Heart left ventricle (tissue), 16 donors: ENCODE measurements at regions of chr6 and their contacts with region 1.

Region 1: DNA sequence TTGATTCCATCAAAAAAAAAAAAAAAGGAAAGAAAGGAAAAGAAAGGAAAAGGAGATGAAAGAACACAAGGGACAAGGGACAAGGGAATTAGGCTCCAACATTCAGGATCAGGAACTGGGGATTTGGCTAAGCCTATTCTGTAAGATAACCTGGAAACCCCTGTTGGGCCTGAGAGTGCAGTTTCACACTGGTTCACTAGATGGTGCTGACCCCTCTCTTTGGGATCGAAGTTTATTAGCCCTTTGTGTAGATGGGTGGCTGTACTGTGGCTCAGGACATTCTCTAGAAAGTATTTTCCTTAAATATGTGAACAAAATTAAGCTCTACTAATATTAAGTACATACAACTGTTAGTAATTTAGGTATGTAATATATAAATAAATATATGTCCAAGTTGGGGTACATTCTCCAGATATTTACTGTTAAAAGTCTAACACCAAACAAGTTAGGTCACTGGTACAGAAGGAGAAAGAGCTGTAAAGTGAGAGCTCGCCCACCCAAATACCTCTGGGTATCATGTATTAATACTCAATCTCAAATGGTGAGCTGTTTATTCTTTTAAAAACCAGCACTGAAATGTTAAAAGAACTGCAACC is 6.3 kb downstream of the OR2A4 start:
- DNase-seq: peak in 4 of 5 donors; percentile 27 to 36 (median 32)
- ATAC-seq: peak in 3 of 4 donors; percentile 79 to 85 (median 81)
- H3K4me3 ChIP-seq: no peak overlapping the region
- H3K27ac ChIP-seq: no peak overlapping the region
- H3K4me1 ChIP-seq: no peaks in the 10 kb centered on the region
- H3K27me3 ChIP-seq: no peaks in the 10 kb centered on the region
- CTCF ChIP-seq: peak; percentile 54 to 83 (median 75)
- POLR2A ChIP-seq: no peak

Region 2: DNA sequence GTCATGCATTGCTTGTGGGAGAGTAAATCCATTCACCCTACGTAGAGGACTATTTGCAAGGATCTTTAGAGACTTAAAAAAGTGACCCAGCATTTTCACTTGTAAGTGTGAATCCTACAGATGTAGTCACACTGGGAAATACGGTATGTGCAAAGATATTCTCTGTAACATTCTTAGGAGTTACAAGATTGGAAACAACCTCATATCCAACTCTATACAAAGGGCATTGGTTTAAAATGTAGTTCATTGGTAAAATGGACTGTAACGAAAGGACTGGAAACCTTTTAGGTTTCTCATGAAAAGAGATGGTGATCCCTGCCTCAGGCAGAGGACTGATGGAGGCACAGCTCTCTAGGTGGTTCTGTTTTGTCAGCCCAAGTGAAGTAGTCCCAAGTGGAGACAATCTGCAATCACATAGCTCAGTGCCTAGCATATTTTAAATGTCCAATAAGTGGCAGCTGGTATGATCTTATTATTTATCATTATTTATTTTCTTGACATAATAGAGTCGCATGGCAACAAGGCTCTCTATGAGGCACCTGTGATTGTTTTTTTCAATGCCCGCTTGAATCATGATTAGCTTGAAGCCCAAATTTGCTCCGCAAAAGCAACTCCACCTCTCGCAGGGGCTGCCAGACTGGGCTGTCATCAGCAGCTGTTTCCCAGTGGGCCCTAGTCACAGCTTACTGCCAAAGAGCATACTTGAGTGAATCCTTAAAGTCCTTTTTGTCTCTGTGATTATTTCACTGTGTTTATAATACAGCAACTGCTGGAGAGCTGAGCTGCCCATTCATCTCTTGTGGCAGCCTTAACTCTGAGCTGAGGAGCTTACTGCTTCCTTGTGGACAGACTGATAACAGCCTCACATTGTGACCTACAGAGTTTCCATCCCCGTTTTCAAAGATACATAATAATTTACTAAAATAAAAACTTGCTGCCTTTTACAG is 93.1 kb after region 1 on chr6:
- intact Hi-C with region 1: loop called in 2 of 10 experiments (anchors 10 kb)
- DNase-seq: no peak
- ATAC-seq: peak in 2 of 4 donors; percentile 31 to 44
- H3K4me3 ChIP-seq: no peak overlapping the region
- H3K27ac ChIP-seq: no peak overlapping the region
- H3K4me1 ChIP-seq: peaks cover 0 to 5% (median 0%) of the 10 kb centered on the region in 12 donors
- H3K27me3 ChIP-seq: no peaks in the 10 kb centered on the region
- CTCF ChIP-seq: peak in 4 of 12 donors; percentile 21 to 40 (median 28)
- POLR2A ChIP-seq: no peak

Region 3: GRCh38 chr6:132136981-132137380 is 442.1 kb after region 1 on chr6:
- intact Hi-C with region 1: no loop called
- DNase-seq: no peak
- ATAC-seq: no peak
- H3K4me3 ChIP-seq: no peak overlapping the region
- H3K27ac ChIP-seq: no peak overlapping the region
- H3K4me1 ChIP-seq: peaks cover 0 to 27% (median 20%) of the 10 kb centered on the region in 12 donors
- H3K27me3 ChIP-seq: no peaks in the 10 kb centered on the region
- CTCF ChIP-seq: no peak
- POLR2A ChIP-seq: no peak

Region 4: DNA sequence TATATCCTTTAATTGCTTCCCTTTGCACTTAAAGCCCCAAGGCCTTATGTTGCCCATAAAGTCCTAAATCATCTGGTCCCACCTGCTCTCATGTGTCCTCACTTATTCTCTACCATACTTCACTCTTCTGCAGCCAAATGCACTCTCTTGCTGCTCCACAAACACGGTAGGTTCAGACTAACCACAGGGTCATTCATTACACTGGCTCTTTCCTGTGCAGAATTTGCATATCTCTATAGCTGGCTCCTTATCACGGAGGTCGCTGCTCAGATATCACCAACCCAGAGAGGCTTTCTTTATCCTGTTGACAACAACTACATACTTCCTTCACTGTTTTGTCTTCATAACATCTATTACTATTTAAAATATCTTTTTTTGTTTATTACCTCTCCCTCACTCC is 619.5 kb after region 1 on chr6:
- intact Hi-C with region 1: no loop called
- DNase-seq: no peak
- ATAC-seq: no peak
- H3K4me3 ChIP-seq: no peak overlapping the region
- H3K27ac ChIP-seq: no peak overlapping the region
- H3K4me1 ChIP-seq: peaks cover 0 to 3% (median 0%) of the 10 kb centered on the region in 12 donors
- H3K27me3 ChIP-seq: no peaks in the 10 kb centered on the region
- CTCF ChIP-seq: no peak
- POLR2A ChIP-seq: no peak

Region 5: GRCh38 chr6:132456700-132457143 is 761.8 kb after region 1 on chr6:
- intact Hi-C with region 1: no loop called
- DNase-seq: peak; percentile 39 to 74 (median 72)
- ATAC-seq: peak; percentile 94 to 98 (median 96)
- H3K4me3 ChIP-seq: no peak overlapping the region
- H3K27ac ChIP-seq: peak overlapping the region in 2 of 12 donors; percentile 14 to 22
- H3K4me1 ChIP-seq: peaks cover 0 to 12% (median 0%) of the 10 kb centered on the region in 12 donors
- H3K27me3 ChIP-seq: no peaks in the 10 kb centered on the region
- CTCF ChIP-seq: peak in 8 of 12 donors; percentile 9 to 47 (median 28)
- POLR2A ChIP-seq: no peak